Posterior vena cava (tissue), 2 donors: ENCODE measurements at regions of chr13 and their contacts with region 1.

Region 1: GRCh38 chr13:76667551-76667950 is 218.7 kb downstream of the KCTD12 start:
- DNase-seq: no peak

Region 2: GRCh38 chr13:74839656-74840055 is 1827.9 kb before region 1 on chr13:
- intact Hi-C with region 1: no loop called
- DNase-seq: no peak

Region 3: DNA sequence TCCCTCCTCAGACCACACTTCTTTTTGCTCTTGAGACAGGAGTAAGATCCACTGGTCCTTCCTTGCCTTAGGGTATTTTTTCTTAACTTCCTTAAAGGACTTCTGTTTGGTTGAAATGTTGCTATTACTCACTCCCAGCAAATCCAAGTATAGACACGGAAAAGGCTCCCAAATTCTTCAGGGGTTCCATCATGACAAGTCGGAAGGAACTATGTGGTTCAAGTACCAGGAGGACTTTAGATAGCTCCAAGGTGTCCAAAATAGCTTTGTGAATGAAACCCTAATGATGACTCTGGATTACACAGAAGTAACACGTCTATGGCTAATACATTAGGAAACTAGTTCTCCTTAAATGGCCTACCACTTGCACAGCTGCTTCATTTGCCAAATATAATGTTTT is 20.0 kb before region 1 on chr13:
- intact Hi-C with region 1: no loop called
- DNase-seq: no peak

Region 4: DNA sequence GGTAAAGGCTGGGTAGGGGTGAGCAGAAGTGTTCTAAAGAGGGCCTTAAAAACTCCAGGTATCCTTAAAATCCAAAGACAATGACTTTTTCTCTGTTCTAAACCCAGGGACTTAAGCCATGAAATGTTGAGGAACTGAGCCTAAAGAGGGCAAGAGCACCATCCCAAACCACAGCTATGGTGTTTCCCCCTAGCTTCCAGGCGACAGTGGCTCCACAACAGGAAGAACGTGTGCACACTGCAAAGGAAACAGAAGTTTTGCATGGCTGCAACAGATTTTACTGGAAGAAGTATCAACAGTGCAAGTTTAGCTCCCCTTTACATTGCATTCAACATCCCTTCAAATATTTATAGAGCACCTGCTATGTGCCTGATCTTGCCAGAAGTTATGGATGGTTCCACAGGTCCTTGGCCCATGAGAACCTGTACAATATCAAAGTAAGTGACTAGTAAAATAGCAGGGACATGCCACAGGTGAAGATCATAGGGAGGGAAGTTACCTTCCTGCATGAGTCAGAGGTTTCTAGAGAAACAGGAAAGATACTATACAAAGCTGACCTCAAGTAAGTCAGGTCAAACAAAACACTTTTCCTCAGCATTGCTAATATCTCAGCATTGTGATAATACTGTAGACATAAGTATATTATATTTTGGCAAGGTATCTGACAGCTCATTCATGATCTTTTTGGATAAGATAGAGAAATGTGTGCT is 227.0 kb after region 1 on chr13:
- intact Hi-C with region 1: loop called in 1 of 2 experiments (anchors 10 kb)
- DNase-seq: no peak